GM12878 (cell line): ENCODE measurements at regions of chr3 and their contacts with region 1.

Region 1: GRCh38 chr3:61947456-61947855 is 386.1 kb downstream of the PTPRG start:
- DNase-seq: no peak
- ATAC-seq: no peak
- H3K4me3 ChIP-seq: no peak overlapping the region
- H3K27ac ChIP-seq: no peak overlapping the region
- H3K4me1 ChIP-seq: no peaks in the 10 kb centered on the region
- H3K27me3 ChIP-seq: no peaks in the 10 kb centered on the region
- CTCF ChIP-seq: no peak
- EP300 ChIP-seq: no peak
- POLR2A ChIP-seq: no peak
- RAD21 ChIP-seq: no peak

Region 2: DNA sequence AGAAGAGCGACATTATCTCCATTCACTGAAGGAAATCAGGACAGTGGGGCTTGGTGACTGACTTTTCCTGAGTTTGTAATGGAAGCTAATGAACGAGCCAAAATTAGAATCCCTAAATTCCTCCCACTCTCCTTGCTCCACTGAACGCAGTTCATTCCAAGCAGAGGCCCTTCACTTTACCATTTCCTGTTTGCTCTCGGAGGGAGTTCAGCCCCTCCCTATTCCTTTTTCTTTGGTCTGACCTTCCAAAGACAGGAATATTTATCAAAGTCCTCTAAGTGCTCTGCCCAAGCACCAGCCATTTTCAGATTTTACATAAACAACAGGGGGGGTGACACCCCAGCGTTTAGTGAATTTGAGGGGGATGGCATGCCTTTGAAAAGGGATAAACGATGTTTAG is 410.1 kb before region 1 on chr3:
- CTCF ChIA-PET with region 1: no interaction called
- POLR2A ChIA-PET with region 1: no interaction called
- RAD21 ChIA-PET with region 1: no interaction called
- SMC1A ChIA-PET with region 1: no interaction called
- in situ Hi-C with region 1: no loop called
- intact Hi-C with region 1: no loop called
- DNase-seq: no peak
- ATAC-seq: no peak
- H3K4me3 ChIP-seq: no peak overlapping the region
- H3K27ac ChIP-seq: no peak overlapping the region
- H3K4me1 ChIP-seq: no peaks in the 10 kb centered on the region
- H3K27me3 ChIP-seq: no peaks in the 10 kb centered on the region; a peak in 1 of 4 replicates
- CTCF ChIP-seq: no peak
- EP300 ChIP-seq: no peak
- POLR2A ChIP-seq: no peak
- RAD21 ChIP-seq: no peak

Region 3: GRCh38 chr3:61869381-61869942 is 78.0 kb before region 1 on chr3:
- CTCF ChIA-PET with region 1: no interaction called
- POLR2A ChIA-PET with region 1: no interaction called
- RAD21 ChIA-PET with region 1: no interaction called
- SMC1A ChIA-PET with region 1: no interaction called
- in situ Hi-C with region 1: no loop called
- intact Hi-C with region 1: no loop called
- DNase-seq: no peak
- ATAC-seq: no peak
- H3K4me3 ChIP-seq: no peak overlapping the region
- H3K27ac ChIP-seq: no peak overlapping the region
- H3K4me1 ChIP-seq: no peaks in the 10 kb centered on the region
- H3K27me3 ChIP-seq: no peaks in the 10 kb centered on the region
- CTCF ChIP-seq: no peak
- EP300 ChIP-seq: no peak
- POLR2A ChIP-seq: no peak
- RAD21 ChIP-seq: no peak

Region 4: GRCh38 chr3:61919402-61919801 is 28.1 kb before region 1 on chr3:
- CTCF ChIA-PET with region 1: interaction called, 4 read pairs
- POLR2A ChIA-PET with region 1: interaction called, 3 read pairs
- RAD21 ChIA-PET with region 1: interaction called, 7 read pairs
- SMC1A ChIA-PET with region 1: interaction called, 11 read pairs
- in situ Hi-C with region 1: no loop called
- intact Hi-C with region 1: no loop called
- DNase-seq: no peak
- ATAC-seq: no peak
- H3K4me3 ChIP-seq: no peak overlapping the region
- H3K27ac ChIP-seq: no peak overlapping the region
- H3K4me1 ChIP-seq: no peaks in the 10 kb centered on the region
- H3K27me3 ChIP-seq: peaks cover 0 to 2% of the 10 kb centered on the region in 2 experiments; a peak in 1 of 4 replicates
- CTCF ChIP-seq: no peak
- EP300 ChIP-seq: no peak
- POLR2A ChIP-seq: no peak
- RAD21 ChIP-seq: no peak

Region 5: DNA sequence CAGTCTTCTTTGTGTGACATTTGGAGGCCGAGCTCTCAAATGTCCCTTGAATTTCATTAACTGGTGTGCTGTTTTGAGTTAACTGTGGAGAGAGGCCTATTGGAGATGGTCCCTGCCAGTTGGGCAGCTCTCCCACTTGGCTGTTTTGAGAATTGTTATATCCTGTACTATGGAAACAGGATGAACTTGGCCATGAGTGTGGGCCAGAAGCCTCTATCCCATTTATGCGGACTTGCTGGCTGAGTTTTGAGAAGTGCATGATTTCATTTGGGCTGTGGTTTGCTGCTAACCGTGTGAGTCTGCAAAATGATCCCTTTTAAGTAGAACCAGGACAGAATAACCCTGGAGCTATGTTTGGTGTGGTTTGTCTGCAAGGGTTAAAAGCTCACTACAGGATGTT is 20.1 kb before region 1 on chr3:
- CTCF ChIA-PET with region 1: interaction called, 13 read pairs
- POLR2A ChIA-PET with region 1: no interaction called
- RAD21 ChIA-PET with region 1: interaction called, 4 read pairs
- SMC1A ChIA-PET with region 1: interaction called, 12 read pairs
- in situ Hi-C with region 1: no loop called
- intact Hi-C with region 1: no loop called
- DNase-seq: no peak
- ATAC-seq: no peak; the same call in 1 of the 3 replicates
- H3K4me3 ChIP-seq: no peak overlapping the region
- H3K27ac ChIP-seq: no peak overlapping the region
- H3K4me1 ChIP-seq: no peaks in the 10 kb centered on the region
- H3K27me3 ChIP-seq: no peaks in the 10 kb centered on the region; a peak in 1 of 4 replicates
- CTCF ChIP-seq: no peak
- EP300 ChIP-seq: no peak
- POLR2A ChIP-seq: no peak
- RAD21 ChIP-seq: no peak